Panc1 (cell line): ENCODE measurements at regions of chr22 and their contacts with region 1.

Region 1: DNA sequence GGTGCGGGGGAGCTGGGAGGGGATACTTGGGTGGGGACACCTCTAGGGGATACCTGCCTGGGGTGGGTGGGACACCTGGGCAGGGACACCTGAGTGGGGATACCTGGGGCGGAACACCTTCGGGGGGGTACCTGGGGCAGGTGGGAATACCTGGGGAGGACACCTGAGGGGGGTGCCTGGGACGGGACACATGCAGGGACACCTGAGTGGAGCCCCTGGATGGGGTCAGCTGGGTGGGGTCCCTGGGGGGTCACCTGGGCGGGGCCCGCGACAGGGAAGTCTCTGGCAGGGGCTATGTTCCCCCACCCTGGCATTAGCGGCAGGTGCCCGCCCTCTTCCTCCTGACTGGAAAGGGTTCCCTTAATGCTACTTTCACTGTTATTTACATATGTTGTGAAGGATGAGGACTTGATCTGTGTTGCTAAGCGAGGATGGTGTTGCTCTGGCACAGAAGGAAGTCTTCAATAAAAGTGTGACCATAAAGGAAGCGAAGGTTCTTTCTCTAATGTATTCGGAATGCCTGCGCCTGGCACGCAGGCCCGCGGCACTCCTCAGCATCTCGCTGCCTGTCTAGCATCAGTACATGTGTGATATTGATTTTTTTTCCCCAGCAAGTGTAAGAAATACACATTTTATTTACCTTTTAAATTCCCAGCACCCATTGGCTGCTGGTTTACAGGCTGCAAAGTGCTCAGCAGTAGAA is 801.7 kb downstream of the BRD1 start:
- DNase-seq: no peak
- ATAC-seq: no peak
- H3K4me3 ChIP-seq: no peak overlapping the region
- H3K27ac ChIP-seq: no peak overlapping the region
- H3K4me1 ChIP-seq: no peaks in the 10 kb centered on the region
- H3K27me3 ChIP-seq: no peaks in the 10 kb centered on the region
- CTCF ChIP-seq: no peak

Region 2: GRCh38 chr22:47292546-47293320 is 1733.2 kb before region 1 on chr22:
- CTCF ChIA-PET with region 1: interaction called, 10 read pairs
- POLR2A ChIA-PET with region 1: no interaction called
- in situ Hi-C with region 1: no loop called
- intact Hi-C with region 1: no loop called
- DNase-seq: no peak
- ATAC-seq: no peak
- H3K4me3 ChIP-seq: no peak overlapping the region
- H3K27ac ChIP-seq: no peak overlapping the region
- H3K4me1 ChIP-seq: no peaks in the 10 kb centered on the region
- H3K27me3 ChIP-seq: no peaks in the 10 kb centered on the region
- CTCF ChIP-seq: no peak